Activated B cell treated with CpG ODN at 0.5 μM for 24 hours (primary cell): ENCODE measurements at regions of chr12 and their contacts with region 1.

Region 1: DNA sequence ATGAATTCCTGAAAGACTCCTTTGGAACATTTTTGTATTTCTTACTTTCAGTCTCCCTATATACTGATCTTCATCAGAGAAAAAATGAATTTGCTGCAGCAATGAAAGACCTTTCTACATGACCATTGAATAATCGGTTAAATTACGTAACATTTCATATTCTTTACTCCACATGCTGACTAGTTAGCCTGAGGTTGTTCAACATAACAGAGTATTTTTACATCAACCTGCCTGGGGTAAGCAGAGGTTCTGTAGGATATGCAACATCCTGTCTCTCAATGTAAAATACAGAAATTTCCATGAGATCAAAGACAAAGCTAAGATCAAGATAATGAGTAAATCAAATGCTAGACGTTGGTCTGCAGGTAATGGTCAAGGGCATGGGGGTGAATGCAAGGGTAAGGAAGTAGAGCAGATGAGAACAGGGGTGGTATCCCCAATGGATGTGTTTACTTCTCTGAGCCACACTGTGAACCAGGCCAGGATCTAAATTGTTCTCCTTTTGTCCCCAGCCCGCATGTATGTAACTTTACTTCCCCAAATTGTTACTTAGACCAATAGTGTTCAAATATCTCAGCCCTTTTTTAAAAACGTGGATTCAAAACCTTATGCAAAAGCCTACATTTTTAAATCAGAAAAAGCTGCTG is 45.4 kb downstream of the DUSP6 start:
- DNase-seq: no peak
- ATAC-seq: no peak
- H3K4me3 Mint-ChIP-seq: no peak overlapping the region
- H3K27ac Mint-ChIP-seq: no peak overlapping the region
- H3K4me1 Mint-ChIP-seq: no peaks in the 10 kb centered on the region
- H3K27me3 Mint-ChIP-seq: no peaks in the 10 kb centered on the region
- CTCF ChIP-seq: no peak

Region 2: GRCh38 chr12:90199006-90199405 is 892.1 kb after region 1 on chr12:
- CTCF ChIA-PET with region 1: no interaction called
- POLR2A ChIA-PET with region 1: interaction called, 14 read pairs
- intact Hi-C with region 1: no loop called
- DNase-seq: no peak
- ATAC-seq: no peak
- H3K4me3 Mint-ChIP-seq: no peak overlapping the region
- H3K27ac Mint-ChIP-seq: no peak overlapping the region
- H3K4me1 Mint-ChIP-seq: no peaks in the 10 kb centered on the region
- H3K27me3 Mint-ChIP-seq: no peaks in the 10 kb centered on the region
- CTCF ChIP-seq: no peak